ENCODE measurements at regions of chr2 and their contacts with region 1.

Region 1: GRCh38 chr2:112584134-112584890 is at the start of gene CHCHD5:
- DNase-seq: peak; percentile 95 to 98
- ATAC-seq: peak; percentile 82 to 87 (median 84)
- H3K4me3 ChIP-seq: peak within 1 kb of the TSS; percentile 88
- H3K27ac ChIP-seq: peak within 1 kb of the TSS; percentile 92
- H3K4me1 ChIP-seq: peaks cover 22% of the 10 kb centered on the region
- H3K27me3 ChIP-seq: no peaks in the 10 kb centered on the region
- CTCF ChIP-seq: peak; percentile 32
- total RNA-seq, gene CHCHD5: 28.3 to 37.3 (median 32.8) TPM

Region 2: DNA sequence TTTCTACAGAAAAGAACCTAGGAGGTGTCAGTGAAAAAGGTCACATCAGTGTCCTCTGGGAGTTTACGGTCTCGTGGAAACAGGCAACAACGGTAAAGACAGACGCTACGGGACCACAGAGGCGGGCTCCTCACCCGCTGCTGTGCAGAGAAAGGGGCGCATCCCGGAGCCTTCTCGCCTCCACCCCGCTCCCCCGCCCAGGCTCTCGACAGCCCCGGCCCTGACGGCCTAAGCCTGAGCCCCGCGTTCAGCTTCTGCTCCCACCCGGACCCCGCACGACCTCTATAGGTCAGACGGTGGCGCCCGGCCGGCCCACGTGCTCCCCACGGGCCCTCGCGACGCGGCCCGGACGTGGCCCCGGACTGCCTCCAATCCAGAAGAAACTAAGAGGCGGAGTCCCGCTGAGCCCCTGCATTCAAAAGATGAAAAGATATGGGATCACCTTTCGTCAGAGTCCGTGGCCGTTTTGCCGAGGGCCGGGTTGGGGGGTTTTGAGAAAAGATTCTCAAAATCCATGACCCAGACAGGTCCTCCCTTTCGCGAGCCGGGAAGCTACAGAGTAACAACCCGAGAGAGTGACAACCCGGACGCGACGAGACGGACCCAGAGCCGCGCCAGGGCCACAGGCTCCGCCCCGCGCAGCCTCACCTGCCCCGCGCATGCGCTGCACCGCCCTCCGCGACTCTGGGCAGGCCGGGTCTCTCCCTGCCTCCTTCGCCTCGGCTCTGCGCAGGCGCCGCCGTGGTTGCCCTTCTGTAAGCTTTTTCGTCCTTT is 329.7 kb before region 1 on chr2 and contains the start of gene ZC3H8:
- intact Hi-C with region 1: loop called (anchors 10 kb)
- DNase-seq: peak; percentile 95 to 98
- ATAC-seq: peak; percentile 98 to 99 (median 98)
- H3K4me3 ChIP-seq: peak within 1 kb of the TSS; percentile 95
- H3K27ac ChIP-seq: peak within 1 kb of the TSS; percentile 96
- H3K4me1 ChIP-seq: peaks cover 9% of the 10 kb centered on the region
- H3K27me3 ChIP-seq: no peaks in the 10 kb centered on the region
- CTCF ChIP-seq: no peak
- total RNA-seq, gene ZC3H8: 11.1 to 22.5 (median 15.5) TPM

Region 3: GRCh38 chr2:112275306-112275886 is 308.9 kb before region 1 on chr2 and contains the start of gene ZC3H6:
- intact Hi-C with region 1: loop called in 1 of 2 experiments (anchors 10 kb)
- DNase-seq: peak; percentile 99
- ATAC-seq: peak; percentile 97 to 99 (median 98)
- H3K4me3 ChIP-seq: peak within 1 kb of the TSS; percentile 91
- H3K27ac ChIP-seq: peak within 1 kb of the TSS; percentile 100
- H3K4me1 ChIP-seq: peaks cover 6% of the 10 kb centered on the region
- H3K27me3 ChIP-seq: no peaks in the 10 kb centered on the region
- CTCF ChIP-seq: peak; percentile 18
- total RNA-seq, gene ZC3H6: 11.2 to 14.6 (median 13.1) TPM

Region 4: DNA sequence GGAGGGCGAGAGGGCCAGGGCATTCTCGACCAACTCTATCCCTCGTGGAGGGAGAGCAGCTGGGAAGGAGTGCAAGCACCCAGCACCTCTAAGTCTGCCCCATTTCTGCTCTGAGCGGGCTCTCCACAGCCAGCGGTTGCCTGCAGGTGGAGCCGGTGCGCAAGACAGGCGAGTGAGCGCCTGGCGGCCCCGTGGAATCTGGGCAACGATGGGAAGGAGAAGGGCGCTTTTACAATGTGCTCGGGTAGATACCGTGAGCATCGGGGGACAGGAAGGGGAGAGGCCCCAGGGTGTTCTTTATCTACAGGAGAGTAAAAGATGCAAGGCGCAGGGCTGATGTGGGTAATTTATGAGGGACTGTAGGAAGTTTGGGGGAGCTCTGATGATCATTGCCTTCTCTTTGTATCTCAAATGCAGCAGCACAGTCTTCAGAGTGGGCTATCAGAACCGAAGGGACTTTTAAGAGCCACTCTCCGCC is 103.2 kb before region 1 on chr2:
- intact Hi-C with region 1: loop called (anchors 1 to 5 kb)
- DNase-seq: peak; percentile 82 to 90
- ATAC-seq: peak; percentile 84 to 94 (median 89)
- H3K4me3 ChIP-seq: peak overlapping the region; percentile 89
- H3K27ac ChIP-seq: peak overlapping the region; percentile 80
- H3K4me1 ChIP-seq: peaks cover 16% of the 10 kb centered on the region
- H3K27me3 ChIP-seq: no peaks in the 10 kb centered on the region
- CTCF ChIP-seq: peak; percentile 83

Region 5: DNA sequence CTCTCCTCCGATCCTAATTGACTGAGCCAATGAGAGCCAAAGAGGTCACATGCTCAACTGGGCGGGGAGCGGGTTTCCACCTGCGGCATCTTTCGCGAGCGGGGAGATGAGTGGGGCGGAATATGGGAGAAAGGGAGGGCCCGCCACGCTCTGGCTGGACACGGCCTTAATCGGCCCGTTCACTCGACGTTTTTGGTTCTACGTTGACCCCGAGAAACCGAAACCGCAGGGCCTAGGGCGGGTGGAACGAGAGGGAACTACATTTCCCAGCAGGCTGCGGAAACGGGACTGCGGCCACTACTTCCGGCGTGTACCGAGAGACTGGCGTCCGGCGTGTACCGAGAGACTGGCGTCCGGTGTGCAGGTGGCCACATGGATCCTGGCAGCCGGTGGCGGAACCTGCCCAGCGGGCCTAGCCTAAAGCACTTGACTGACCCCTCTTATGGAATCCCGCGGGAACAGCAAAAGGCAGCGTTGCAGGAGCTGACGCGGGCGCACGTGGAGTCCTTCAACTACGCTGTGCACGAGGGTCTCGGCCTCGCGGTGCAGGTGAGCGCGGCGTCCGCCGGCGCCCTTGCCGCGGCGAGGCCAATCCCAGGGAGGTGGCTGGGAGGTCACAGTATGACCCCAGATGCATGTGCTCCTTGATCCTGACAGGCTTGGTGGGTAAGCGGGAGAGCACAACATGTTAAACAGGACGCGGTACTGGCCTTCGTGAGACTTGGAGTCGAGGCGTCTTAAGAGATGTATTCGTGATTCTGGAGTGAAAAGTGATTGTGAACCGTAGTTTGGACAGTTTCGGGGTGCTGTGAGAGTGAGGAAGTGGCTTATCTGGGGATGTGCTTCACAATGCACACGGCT is 42.0 kb before region 1 on chr2 and contains the start of gene POLR1B:
- intact Hi-C with region 1: loop called in 1 of 2 experiments (anchors 5 kb)
- DNase-seq: peak; percentile 86 to 94
- ATAC-seq: peak; percentile 96 to 99 (median 97)
- H3K4me3 ChIP-seq: peak within 1 kb of the TSS; percentile 90
- H3K27ac ChIP-seq: peak within 1 kb of the TSS; percentile 83
- H3K4me1 ChIP-seq: peaks cover 20% of the 10 kb centered on the region
- H3K27me3 ChIP-seq: no peaks in the 10 kb centered on the region
- CTCF ChIP-seq: no peak
- total RNA-seq, gene POLR1B: 12.2 to 22.8 (median 19.4) TPM

Region 6: GRCh38 chr2:112645310-112646101 is 61.2 kb after region 1 on chr2 and contains the start of gene SLC20A1:
- intact Hi-C with region 1: loop called in 1 of 2 experiments (anchors 1 kb)
- DNase-seq: peak; percentile 97 to 99
- ATAC-seq: peak; percentile 97 to 98 (median 98)
- H3K4me3 ChIP-seq: peak within 1 kb of the TSS; percentile 99
- H3K27ac ChIP-seq: peak within 1 kb of the TSS; percentile 95
- H3K4me1 ChIP-seq: peaks cover 38% of the 10 kb centered on the region
- H3K27me3 ChIP-seq: no peaks in the 10 kb centered on the region
- CTCF ChIP-seq: peak; percentile 38
- total RNA-seq, gene SLC20A1: 11.8 to 23.6 (median 17.8) TPM

Region 7: GRCh38 chr2:112733456-112733855 is 149.1 kb after region 1 on chr2:
- intact Hi-C with region 1: no loop called
- DNase-seq: no peak
- ATAC-seq: peak in 1 of 4 donors; percentile 42
- H3K4me3 ChIP-seq: no peak overlapping the region
- H3K27ac ChIP-seq: no peak overlapping the region
- H3K4me1 ChIP-seq: no peaks in the 10 kb centered on the region
- H3K27me3 ChIP-seq: no peaks in the 10 kb centered on the region
- CTCF ChIP-seq: no peak